ENCODE measurements at regions of chr2 and their contacts with region 1.

Region 1: GRCh38 chr2:85642725-85643124 is 25.3 kb downstream of the SFTPB start:
- DNase-seq: no peak

Region 2: GRCh38 chr2:85621338-85621737 is 21.4 kb before region 1 on chr2:
- CTCF ChIA-PET with region 1: interaction called, 10 read pairs
- POLR2A ChIA-PET with region 1: no interaction called
- DNase-seq: no peak

Region 3: GRCh38 chr2:85707304-85707703 is 64.6 kb after region 1 on chr2:
- CTCF ChIA-PET with region 1: interaction called, 17 read pairs
- POLR2A ChIA-PET with region 1: no interaction called
- DNase-seq: peak; percentile 78

Measured in HEK293T (cell line).